Activated B cell treated with CpG ODN at 0.5 μM for 24 hours (primary cell): ENCODE measurements at regions of chr12 and their contacts with region 1.

Region 1: DNA sequence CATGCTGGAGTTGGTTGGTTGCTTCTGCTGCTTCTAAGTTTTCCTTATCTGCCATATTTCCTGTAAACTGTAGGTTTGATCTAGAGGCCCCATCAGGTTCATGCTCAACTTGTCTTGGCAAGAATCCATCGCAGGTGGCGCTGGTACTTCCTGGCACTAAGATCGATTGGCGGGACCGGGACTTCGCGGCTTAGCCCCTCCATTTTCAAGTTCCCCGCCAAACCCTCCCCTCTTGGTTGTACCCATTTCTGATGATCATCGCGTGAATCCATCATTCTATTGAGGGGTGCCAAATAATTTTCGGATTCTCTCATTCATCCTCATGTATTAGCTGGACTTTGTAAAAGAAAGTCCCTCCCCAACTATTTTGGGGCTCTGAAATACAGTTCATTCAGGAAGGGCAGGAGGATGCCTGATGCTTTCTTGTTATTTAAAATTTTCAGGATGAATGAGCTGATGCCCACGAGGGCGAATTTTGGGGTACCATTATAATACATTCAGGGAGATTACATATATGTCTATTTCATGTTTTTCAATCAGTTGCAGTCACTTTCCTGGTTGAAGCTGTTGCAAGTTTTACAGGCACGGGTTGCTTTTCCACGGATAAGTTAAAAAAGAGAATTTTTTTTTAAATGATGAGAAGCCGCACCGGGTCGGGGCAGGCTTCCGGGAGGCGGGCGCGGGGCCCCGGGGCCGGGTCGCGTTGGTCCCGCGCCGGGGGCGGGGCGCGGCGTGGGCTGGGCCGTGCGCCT is 395 bp upstream of the BRI3BP start:
- DNase-seq: peak; percentile 60
- ATAC-seq: peak; percentile 55
- H3K4me3 Mint-ChIP-seq: peak overlapping the region; percentile 89
- H3K27ac Mint-ChIP-seq: peak overlapping the region; percentile 92
- H3K4me1 Mint-ChIP-seq: peaks cover 52% of the 10 kb centered on the region
- H3K27me3 Mint-ChIP-seq: no peaks in the 10 kb centered on the region
- CTCF ChIP-seq: no peak

Region 2: DNA sequence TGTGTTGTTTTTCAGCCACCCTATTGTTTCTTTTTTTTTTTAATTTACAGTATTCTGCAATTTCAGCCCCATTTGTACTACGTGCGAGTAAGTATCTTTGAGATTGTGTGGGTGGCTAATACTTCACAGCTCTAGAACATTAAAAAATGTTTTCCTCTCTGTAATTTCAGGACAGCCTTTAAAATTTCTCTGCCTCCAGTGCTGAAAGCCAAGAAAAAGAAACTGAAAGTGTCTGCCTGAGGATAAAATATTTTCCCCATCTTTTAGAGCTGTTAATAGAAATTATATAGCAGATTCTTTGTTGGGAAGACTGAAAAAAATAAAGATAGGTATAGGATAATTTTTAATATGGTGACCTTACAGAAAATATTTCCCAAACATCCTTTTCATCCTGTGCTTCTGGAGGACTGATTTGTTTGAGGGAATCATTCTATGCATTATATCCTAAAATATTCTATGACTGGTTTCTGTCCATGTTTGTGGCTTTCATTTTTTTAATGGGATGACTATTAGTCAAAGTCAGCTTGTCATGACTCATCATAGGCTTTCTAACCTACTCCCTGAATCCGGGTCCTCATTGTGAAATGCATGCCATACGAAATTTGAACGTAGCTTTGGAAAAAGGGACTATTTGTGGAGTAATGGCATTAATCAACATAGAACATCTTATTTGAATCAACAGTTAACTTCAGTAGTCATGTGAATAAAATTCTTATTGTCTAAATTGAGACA is 1332.9 kb before region 1 on chr12:
- CTCF ChIA-PET with region 1: no interaction called
- POLR2A ChIA-PET with region 1: interaction called, 10 read pairs
- intact Hi-C with region 1: no loop called
- DNase-seq: no peak
- ATAC-seq: no peak
- H3K4me3 Mint-ChIP-seq: no peak overlapping the region
- H3K27ac Mint-ChIP-seq: peak overlapping the region; percentile 66
- H3K4me1 Mint-ChIP-seq: peaks cover 30% of the 10 kb centered on the region
- H3K27me3 Mint-ChIP-seq: no peaks in the 10 kb centered on the region
- CTCF ChIP-seq: no peak

Region 3: GRCh38 chr12:124917135-124917840 is 75.8 kb before region 1 on chr12:
- CTCF ChIA-PET with region 1: interaction called, 3 read pairs
- POLR2A ChIA-PET with region 1: interaction called, 30 read pairs
- intact Hi-C with region 1: loop called (anchors 2 kb)
- DNase-seq: peak; percentile 77
- ATAC-seq: peak; percentile 63
- H3K4me3 Mint-ChIP-seq: peak overlapping the region; percentile 100
- H3K27ac Mint-ChIP-seq: peak overlapping the region; percentile 100
- H3K4me1 Mint-ChIP-seq: peaks cover 91% of the 10 kb centered on the region
- H3K27me3 Mint-ChIP-seq: no peaks in the 10 kb centered on the region
- CTCF ChIP-seq: no peak

Region 4: GRCh38 chr12:124940549-124941527 is 52.2 kb before region 1 on chr12:
- CTCF ChIA-PET with region 1: interaction called, 3 read pairs
- POLR2A ChIA-PET with region 1: interaction called, 7 read pairs
- intact Hi-C with region 1: loop called (anchors 1 kb)
- DNase-seq: peak; percentile 62
- ATAC-seq: peak; percentile 60
- H3K4me3 Mint-ChIP-seq: no peak overlapping the region
- H3K27ac Mint-ChIP-seq: no peak overlapping the region
- H3K4me1 Mint-ChIP-seq: peaks cover 15% of the 10 kb centered on the region
- H3K27me3 Mint-ChIP-seq: no peaks in the 10 kb centered on the region
- CTCF ChIP-seq: no peak

Region 5: GRCh38 chr12:124964836-124965462 is 28.1 kb before region 1 on chr12:
- CTCF ChIA-PET with region 1: no interaction called
- POLR2A ChIA-PET with region 1: no interaction called
- intact Hi-C with region 1: no loop called
- DNase-seq: no peak
- ATAC-seq: no peak
- H3K4me3 Mint-ChIP-seq: no peak overlapping the region
- H3K27ac Mint-ChIP-seq: no peak overlapping the region
- H3K4me1 Mint-ChIP-seq: peaks cover 3% of the 10 kb centered on the region
- H3K27me3 Mint-ChIP-seq: no peaks in the 10 kb centered on the region
- CTCF ChIP-seq: no peak

Region 6: DNA sequence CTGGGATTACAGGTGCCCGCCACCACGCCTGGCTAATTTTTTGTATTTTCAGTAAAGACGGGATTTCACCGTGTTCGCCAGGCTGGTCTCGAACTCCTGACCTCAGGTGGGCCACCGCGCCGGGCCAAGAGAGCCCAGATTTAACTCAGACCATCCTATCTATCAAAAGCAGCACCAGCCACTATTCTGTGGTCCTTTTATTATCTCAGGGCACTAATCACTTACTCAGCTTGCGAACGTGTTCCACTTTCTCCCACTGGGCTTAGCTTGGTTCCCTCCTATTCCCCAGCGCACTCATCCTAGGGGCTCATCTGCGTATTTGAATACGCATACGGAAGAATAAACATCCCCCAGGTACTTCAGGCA is 56.0 kb after region 1 on chr12:
- CTCF ChIA-PET with region 1: no interaction called
- POLR2A ChIA-PET with region 1: interaction called, 19 read pairs
- intact Hi-C with region 1: loop called (anchors 1 kb)
- DNase-seq: no peak
- ATAC-seq: no peak
- H3K4me3 Mint-ChIP-seq: peak overlapping the region; percentile 92
- H3K27ac Mint-ChIP-seq: peak overlapping the region; percentile 90
- H3K4me1 Mint-ChIP-seq: peaks cover 9% of the 10 kb centered on the region
- H3K27me3 Mint-ChIP-seq: no peaks in the 10 kb centered on the region
- CTCF ChIP-seq: no peak

Region 7: DNA sequence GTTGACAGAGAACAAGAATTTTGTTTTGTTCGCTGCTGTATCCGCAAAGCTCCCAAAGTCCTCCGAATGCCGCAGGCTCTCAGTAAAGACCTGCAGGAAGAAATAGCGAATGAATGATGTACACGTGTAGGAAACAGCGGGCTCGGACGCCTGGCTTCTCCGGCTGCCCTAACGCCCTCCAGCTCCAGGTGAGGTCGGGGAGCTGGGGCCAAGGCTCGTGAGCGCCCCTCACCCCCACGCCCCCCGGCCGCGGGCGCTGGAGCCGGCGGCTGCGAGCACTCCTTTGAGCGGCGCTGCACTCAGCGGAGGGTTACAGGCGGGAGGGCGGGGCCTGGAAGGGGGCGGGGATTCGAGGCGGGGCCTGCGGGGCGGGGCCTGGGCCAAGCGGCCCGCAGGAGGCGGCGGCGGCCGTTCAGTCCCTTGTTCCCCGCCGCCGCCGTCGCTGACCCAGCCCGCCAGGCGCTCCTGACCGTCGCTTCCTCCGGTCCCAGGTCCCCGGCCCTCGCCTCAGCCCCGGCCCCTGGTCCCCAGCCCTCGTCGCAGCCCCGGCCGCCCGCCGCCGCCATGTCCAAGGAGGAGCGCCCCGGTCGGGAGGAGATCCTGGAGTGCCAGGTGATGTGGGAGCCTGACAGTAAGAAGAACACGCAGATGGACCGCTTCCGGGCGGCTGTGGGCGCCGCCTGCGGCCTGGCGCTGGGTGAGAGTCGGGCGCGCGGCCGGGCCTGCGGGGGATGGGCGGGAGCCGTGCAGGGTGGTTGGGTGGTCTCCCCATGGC is 72.2 kb after region 1 on chr12 and contains the start of gene AACS:
- CTCF ChIA-PET with region 1: no interaction called
- POLR2A ChIA-PET with region 1: no interaction called
- intact Hi-C with region 1: loop called (anchors 1 kb)
- DNase-seq: peak; percentile 69
- ATAC-seq: peak; percentile 99
- H3K4me3 Mint-ChIP-seq: peak within 1 kb of the TSS; percentile 81
- H3K27ac Mint-ChIP-seq: peak within 1 kb of the TSS; percentile 2
- H3K4me1 Mint-ChIP-seq: peaks cover 14% of the 10 kb centered on the region
- H3K27me3 Mint-ChIP-seq: no peaks in the 10 kb centered on the region
- CTCF ChIP-seq: no peak
- total RNA-seq, gene AACS: 14.9 and 18.7 TPM in 2 replicates

Region 8: DNA sequence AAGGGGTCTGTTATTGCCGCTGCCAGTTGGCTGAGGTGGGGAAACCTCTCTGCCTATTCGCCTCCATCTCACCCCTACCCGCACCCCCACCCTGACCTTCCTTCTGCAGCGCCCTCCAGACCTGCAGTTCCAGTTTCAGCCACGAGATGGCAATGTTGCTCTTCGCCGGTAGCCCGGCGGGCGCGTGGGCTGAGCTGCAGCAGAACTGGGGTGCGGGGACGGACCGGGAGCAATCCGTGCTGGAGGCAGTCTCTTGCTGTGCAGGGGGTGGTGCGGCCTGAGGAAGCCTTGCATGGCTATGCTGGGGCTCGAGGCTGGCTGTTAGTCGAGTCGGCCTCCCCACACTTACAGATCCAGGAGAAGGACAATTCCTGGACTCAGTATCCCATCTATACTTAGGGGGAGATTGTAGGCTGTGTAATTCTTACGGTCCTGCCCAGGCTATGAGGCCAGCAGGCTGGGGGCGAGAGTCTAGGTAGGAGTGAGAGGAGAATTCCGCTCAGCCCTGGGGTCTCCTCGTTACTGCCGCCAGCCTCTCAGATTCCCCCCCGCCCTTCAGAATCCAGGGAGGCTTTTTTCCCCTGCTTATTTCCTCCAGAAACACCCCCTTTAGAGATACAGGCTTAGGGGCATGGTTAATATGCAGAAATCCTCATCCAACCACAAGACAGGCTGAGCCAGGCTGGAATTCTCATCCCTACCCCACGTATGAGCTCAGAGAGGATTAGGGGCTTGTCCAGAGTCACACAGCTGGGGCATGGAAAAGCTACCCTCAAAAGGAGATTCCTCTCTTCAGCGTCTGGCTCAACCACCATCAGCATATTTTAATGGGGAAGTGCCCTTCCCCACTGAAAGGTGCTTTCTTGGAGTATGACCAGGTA is 190.4 kb after region 1 on chr12:
- CTCF ChIA-PET with region 1: no interaction called
- POLR2A ChIA-PET with region 1: no interaction called
- intact Hi-C with region 1: loop called (anchors 5 kb)
- DNase-seq: peak; percentile 81
- ATAC-seq: peak; percentile 84
- H3K4me3 Mint-ChIP-seq: peak overlapping the region; percentile 16
- H3K27ac Mint-ChIP-seq: no peak overlapping the region
- H3K4me1 Mint-ChIP-seq: peaks cover 17% of the 10 kb centered on the region
- H3K27me3 Mint-ChIP-seq: peaks cover 58% of the 10 kb centered on the region
- CTCF ChIP-seq: peak; percentile 52